GM12878 (cell line): ENCODE measurements at regions of chr9 and their contacts with region 1.

Region 1: GRCh38 chr9:109286571-109286977 is 34.3 kb downstream of the EPB41L4B start:
- DNase-seq: no peak
- ATAC-seq: no peak
- H3K4me3 ChIP-seq: no peak overlapping the region
- H3K27ac ChIP-seq: no peak overlapping the region
- H3K4me1 ChIP-seq: no peaks in the 10 kb centered on the region
- H3K27me3 ChIP-seq: no peaks in the 10 kb centered on the region; a peak in 1 of 4 replicates
- CTCF ChIP-seq: no peak
- EP300 ChIP-seq: no peak
- POLR2A ChIP-seq: no peak
- RAD21 ChIP-seq: no peak

Region 2: DNA sequence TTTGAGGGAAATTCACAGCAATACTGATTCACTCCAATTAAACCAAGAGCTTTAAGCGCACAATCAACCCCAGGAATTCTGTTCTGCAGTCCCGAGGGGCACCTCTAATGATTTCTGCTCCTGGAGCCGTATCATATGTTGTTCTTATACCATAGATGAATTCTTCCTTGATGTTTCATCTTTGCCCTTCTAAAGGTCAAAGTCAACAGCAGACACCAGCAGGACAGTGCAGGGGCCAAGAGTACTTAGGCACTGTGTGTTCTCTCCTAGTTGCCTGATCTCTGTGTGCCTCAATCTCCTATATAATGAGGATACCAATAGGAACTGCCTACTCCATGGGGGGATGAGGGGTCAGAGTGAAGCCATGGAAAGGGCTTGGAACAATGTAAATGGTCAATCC is 17.8 kb after region 1 on chr9:
- CTCF ChIA-PET with region 1: no interaction called
- POLR2A ChIA-PET with region 1: no interaction called
- RAD21 ChIA-PET with region 1: no interaction called
- SMC1A ChIA-PET with region 1: no interaction called
- in situ Hi-C with region 1: no loop called
- intact Hi-C with region 1: loop called (anchors 2 kb)
- DNase-seq: no peak
- ATAC-seq: no peak
- H3K4me3 ChIP-seq: no peak overlapping the region
- H3K27ac ChIP-seq: no peak overlapping the region
- H3K4me1 ChIP-seq: no peaks in the 10 kb centered on the region
- H3K27me3 ChIP-seq: peaks cover 0 to 1% of the 10 kb centered on the region in 2 experiments; a peak in 2 of 4 replicates
- CTCF ChIP-seq: no peak
- EP300 ChIP-seq: no peak
- POLR2A ChIP-seq: no peak
- RAD21 ChIP-seq: no peak